Dorsolateral prefrontal cortex (tissue), 120 donors: ENCODE measurements at regions of chr2 and their contacts with region 1.

Region 1: DNA sequence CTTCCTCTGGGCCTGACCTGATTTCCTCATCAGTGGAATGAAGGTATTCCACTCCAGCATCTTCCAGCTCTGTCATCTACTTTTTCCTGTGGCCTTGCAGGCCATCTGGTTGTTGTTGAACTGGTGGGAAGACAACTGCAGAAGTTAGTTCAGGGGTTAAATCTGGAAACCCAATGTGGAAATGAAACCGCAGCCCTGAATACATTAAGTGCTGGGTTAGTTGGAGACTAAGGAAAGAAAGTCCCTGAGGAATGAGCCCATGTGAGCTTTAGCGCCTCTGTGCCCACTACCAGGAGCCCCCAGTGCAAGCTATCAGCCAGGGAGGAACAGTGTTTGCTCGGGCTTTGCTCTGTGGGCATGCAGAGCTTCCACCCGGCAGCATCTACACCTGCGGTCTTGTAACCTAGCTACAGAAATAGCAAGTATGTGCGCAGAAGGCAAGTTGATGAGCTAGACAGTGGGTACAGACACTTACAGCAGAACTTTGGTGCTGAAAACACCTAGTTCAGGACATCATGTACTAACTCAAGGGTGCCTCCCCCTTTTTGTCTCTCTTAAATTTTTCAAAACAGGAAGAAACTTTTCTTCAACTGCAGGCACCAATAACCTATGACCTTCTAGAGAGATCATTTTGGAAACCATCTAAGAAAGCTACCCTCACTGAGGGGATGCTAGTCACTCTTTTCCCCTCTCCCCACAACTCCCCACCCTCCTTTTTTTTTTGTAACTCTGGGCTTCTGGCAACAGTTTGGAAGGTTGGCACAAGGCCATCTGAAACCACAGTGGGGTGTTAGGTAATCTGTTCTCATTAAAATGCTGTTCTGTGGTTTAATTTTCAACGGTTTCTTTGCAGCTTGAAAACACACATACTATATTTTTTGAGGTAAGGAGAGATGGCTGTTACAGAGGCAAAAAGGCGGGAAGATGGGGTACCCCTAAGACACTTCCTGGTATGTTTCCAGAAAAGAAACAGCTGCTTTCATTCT is 18.3 kb upstream of the CXCR4 start:
- DNase-seq: no peak
- H3K4me3 ChIP-seq: no peak overlapping the region
- H3K27ac ChIP-seq: peak overlapping the region in 7 of 59 donors; percentile 6 to 45 (median 16)
- H3K27me3 ChIP-seq: no peaks in the 10 kb centered on the region
- CTCF ChIP-seq: no peak

Region 2: DNA sequence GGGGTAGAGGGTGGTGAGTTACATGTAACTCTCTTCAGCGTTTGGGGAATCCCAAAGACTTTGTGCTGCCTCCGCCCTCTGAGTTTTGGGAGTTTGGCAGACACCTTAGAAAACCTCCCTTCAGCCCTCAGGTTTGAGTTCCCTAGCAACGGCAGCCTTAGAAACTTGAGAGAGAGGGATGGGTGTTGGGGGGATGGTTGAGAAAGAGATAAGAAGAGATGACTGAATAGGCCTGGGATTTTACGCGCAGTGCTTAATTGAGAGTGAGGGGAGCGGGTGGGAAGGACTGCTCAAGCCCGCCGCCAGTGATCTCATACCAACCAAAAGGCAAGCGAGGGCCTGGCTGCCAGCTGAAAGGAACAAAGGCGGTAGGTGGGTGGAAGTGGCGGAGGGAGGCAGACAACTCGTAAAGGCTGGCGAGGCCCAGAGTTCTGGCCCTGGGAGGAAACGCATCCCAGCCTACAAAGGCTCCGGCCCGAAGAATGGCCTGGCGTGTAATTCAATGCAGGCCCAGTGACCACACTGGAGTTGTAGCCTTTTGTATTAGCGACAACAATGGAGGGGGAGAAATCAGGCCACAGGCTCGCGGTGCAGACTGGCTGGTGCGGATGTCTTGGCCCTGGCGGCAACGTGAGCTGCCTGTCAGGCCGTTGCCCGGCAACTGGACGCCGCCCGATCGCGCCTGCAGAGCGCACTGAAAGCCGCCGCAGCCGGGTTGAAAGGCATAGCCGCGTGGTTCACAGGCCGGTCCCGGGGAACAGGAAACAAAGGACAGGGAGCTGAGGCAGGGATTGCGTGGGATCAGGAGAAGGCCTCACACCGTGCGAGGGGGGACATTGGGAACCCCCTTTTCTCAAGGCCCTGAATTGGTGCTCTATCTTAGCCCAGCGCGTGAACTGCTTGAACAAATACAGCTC is 110.9 kb before region 1 on chr2:
- intact Hi-C with region 1: no loop called
- DNase-seq: peak; percentile 74 to 93 (median 88)
- H3K4me3 ChIP-seq: peak overlapping the region in 57 of 59 donors; percentile 2 to 59 (median 37)
- H3K27ac ChIP-seq: peak overlapping the region in 58 of 59 donors; percentile 10 to 93 (median 80)
- H3K27me3 ChIP-seq: no peaks in the 10 kb centered on the region
- CTCF ChIP-seq: peak in 15 of 56 donors; percentile 8 to 48 (median 24)

Region 3: DNA sequence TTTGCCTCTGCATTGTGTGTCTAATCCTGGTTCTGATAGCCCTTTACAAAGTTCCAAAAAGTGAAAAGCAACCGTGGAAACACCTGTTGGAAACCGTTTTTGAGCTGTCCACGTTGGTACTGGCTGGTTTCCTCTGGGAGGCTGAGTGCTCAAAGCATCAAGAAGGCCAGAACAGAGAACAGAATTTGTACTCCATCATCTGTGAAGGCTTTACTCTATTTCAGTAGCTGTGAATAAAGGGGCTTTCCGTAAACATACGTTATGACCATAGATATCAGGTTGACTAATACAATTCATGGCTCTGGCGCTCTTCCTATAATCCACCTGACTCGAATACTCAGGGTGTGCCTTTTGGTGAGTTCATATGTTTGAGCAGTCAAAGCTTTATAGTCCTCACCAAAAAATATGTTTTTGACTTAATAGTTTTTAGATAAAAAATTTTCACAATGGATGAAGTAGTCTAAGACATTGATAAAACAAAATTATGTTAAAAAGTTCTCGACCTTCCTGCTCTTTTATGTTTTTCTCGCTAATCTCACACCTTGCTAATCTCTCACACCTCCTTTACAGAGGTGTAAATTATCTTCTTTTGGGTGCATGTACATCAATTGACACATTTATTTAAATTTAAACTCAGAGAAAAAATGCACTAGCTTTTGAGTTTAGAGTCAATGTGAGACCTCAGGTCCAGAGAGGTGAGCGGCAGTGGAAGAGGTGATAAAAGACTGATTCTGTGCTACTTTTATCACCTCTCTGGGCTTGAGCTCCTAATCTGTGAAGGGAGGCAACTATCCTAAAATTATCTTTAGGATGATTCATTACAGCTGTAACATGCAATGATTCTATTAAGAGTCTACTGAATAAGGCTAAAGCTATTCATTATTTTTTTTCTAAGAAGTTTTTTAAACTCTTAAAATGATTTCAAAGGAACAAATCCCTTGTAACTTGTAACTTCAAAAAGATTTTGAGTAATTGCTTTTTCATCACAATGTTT is 83.5 kb before region 1 on chr2:
- intact Hi-C with region 1: no loop called
- DNase-seq: no peak
- H3K4me3 ChIP-seq: no peak overlapping the region
- H3K27ac ChIP-seq: no peak overlapping the region
- H3K27me3 ChIP-seq: no peaks in the 10 kb centered on the region
- CTCF ChIP-seq: no peak

Region 4: DNA sequence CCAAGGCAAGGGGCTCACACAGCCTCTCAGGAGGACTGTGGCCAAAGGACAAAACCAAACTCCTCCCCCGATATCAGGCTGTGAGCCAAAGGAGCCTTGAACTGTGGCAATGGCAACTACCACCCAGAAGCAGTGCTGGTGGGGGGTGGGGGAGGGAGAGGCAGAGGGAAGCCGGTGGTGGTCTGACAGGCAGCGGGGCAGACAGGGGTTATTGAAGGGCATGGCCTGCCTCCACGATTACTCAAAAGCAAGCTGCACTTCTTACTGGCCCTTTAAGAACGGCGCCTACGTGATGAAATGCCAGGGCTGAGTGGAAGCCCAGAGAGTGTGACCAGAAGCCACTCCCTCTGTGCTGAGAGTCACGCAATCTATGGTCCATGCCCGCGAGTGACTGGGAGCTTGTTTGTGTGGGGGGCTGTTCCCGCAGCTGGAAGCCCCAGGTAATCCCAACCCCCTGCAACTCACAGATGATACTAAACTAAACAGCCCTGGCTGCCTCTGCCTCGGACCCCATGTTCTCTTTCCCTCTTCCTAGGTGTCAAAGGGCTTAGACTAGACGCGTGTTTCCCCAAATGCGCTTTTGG is 110.0 kb after region 1 on chr2:
- intact Hi-C with region 1: loop called in 1 of 2 experiments (anchors 10 kb)
- DNase-seq: no peak
- H3K4me3 ChIP-seq: peak overlapping the region in 1 of 59 donors; percentile 42
- H3K27ac ChIP-seq: peak overlapping the region in 1 of 59 donors; percentile 15
- H3K27me3 ChIP-seq: no peaks in the 10 kb centered on the region
- CTCF ChIP-seq: no peak

Region 5: GRCh38 chr2:136362676-136363390 is 226.6 kb after region 1 on chr2:
- intact Hi-C with region 1: no loop called
- DNase-seq: no peak
- H3K4me3 ChIP-seq: no peak overlapping the region
- H3K27ac ChIP-seq: no peak overlapping the region
- H3K27me3 ChIP-seq: peaks cover 0 to 6% (median 0%) of the 10 kb centered on the region in 45 donors
- CTCF ChIP-seq: no peak